ENCODE measurements at regions of chr7 and their contacts with region 1.

Region 1: DNA sequence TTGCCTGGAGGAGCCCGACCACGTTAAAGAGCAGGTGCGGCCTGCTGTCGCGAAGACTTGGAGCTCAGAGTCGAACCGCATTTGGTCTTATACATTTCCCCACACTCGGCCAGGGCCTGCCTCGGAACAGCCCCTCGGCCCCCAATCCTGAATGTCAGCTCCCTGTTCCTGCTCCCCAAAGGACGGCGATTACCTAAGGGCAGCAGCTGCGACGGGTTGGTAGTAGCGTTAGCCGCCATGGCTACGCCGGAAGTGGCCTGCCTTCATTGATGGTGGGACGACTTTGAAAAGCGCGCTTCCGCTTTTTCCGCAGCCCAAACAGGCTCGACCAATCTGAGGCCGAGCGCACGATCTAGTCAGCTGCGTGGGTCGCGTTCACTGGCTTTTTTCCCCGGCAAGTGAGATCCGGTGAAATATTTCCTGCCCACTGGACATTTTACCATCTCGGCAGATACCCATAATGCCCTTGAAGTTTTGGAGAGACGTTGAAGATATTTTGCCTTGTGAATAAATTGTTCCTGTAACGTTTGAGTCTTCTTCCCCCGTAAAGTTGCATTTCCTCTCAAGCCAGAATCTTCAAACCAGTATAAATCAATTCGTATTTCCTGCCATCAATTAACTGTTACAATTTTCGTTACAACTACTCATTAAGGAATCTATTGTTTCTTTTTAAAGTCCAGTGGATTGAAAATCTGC is at the start of gene LSM5:
- DNase-seq: peak; percentile 64
- H3K4me3 ChIP-seq: peak within 1 kb of the TSS; percentile 78
- H3K27me3 ChIP-seq: no peaks in the 10 kb centered on the region
- CTCF ChIP-seq: no peak
- polyA plus RNA-seq, gene LSM5: 6.7 and 22.8 TPM in 2 replicates

Region 2: GRCh38 chr7:32479574-32480200 is 10.6 kb before region 1 on chr7:
- CTCF ChIA-PET with region 1: interaction called, 14 read pairs
- POLR2A ChIA-PET with region 1: no interaction called
- DNase-seq: no peak
- H3K4me3 ChIP-seq: no peak overlapping the region
- H3K27me3 ChIP-seq: no peaks in the 10 kb centered on the region; the same call in 1 of the 2 replicates
- CTCF ChIP-seq: peak; percentile 94

Region 3: DNA sequence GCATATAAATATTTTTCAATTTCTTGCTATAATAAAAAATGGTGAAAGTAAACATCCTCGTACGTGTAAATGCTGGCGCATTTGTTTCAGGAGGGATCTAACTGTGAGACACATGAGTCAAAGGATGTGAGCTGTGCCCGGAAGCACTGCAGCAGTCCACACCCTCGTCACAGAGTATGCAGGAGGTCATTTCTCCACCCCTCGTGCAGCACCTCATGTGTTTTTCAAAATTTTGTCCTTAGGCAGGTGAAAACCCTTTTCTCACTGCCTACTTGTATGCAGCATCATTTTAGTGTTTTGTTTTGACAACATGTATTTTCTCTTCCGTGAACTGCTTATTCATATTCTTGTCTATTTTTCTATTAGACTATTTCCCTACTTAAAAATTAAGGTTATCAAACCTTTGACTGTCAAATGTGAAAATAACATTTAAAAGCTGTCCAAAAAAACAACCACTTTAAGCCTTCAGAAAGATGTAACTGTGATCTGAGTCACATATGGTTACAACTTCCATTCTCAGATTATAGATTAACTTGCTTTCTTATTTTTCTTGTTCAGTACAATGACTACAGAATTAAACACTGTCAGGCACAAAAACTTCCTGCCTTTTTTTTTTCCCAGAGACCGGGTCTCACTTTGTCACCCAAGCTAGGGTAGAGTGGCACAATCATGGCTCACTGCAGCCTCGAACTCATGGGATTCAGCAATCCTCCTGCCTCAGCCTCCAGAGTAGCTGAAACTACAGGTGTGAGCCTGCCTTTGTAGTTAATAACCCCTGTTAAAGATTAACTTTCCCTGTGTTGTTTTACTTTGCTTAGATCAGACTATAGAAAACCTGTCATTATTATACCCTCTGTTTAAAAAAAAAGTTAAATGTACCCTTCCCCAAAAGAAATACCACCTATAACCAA is 168.0 kb after region 1 on chr7:
- CTCF ChIA-PET with region 1: no interaction called
- POLR2A ChIA-PET with region 1: no interaction called
- DNase-seq: no peak
- H3K4me3 ChIP-seq: no peak overlapping the region
- H3K27me3 ChIP-seq: no peaks in the 10 kb centered on the region
- CTCF ChIP-seq: no peak